Ascending aorta (tissue), 2 donors: ENCODE measurements at regions of chr9 and their contacts with region 1.

Region 1: GRCh38 chr9:119951090-119951489 is 581.9 kb upstream of the BRINP1 start:
- DNase-seq: peak in 1 of 2 donors; percentile 76
- H3K4me3 ChIP-seq: no peak overlapping the region
- H3K27ac ChIP-seq: peak overlapping the region; percentile 39 to 70
- H3K4me1 ChIP-seq: peaks cover 0 to 14% of the 10 kb centered on the region in 2 donors
- H3K27me3 ChIP-seq: no peaks in the 10 kb centered on the region
- CTCF ChIP-seq: no peak

Region 2: DNA sequence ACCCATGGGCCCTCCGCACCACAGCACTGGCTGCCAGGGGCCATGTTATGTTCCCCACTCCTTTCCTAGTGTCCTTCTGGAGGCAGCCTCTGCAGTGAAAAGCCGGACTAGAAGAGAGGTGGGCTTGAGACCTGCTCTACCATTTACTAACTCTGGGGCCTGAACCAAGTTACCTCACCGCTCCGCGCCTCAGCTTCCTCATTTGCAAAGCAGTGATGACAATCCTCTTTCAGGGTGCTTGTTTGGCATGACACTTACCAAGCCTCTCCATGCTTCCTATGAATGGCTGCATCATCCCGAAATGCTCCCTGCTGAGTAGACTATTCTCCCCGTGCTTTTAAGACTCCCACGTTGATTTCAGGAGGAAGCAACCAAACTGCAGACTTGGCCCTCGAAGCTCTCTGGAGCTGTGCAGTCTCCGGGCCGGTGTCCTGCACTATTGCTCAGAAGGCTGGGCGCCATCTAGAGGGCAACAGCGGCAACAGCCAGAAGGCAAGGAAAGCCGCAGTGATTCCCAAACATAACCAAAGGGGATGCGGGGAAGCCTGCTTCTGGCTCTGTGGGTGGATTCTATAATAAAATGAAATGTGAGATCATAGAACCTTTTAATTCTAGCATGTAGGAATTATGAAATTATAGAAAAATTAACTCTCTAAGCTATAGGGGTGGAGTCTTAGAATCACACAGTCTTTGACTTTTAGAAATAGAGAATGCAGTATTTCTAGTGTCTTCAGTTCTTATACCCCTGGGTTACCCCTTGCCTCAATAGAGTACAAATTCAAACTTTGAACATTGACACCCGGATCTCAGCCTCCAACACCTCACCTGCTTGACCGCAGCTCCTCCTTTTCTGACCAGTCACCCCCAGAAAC is 18.0 kb after region 1 on chr9:
- intact Hi-C with region 1: no loop called
- DNase-seq: peak in 1 of 2 donors; percentile 85
- H3K4me3 ChIP-seq: no peak overlapping the region
- H3K27ac ChIP-seq: no peak overlapping the region
- H3K4me1 ChIP-seq: peaks cover 0 to 3% of the 10 kb centered on the region in 2 donors
- H3K27me3 ChIP-seq: no peaks in the 10 kb centered on the region
- CTCF ChIP-seq: peak; percentile 69 to 95 (median 93)

Region 3: GRCh38 chr9:120014799-120015198 is 63.7 kb after region 1 on chr9:
- intact Hi-C with region 1: no loop called
- DNase-seq: no peak
- H3K4me3 ChIP-seq: no peak overlapping the region
- H3K27ac ChIP-seq: no peak overlapping the region
- H3K4me1 ChIP-seq: no peaks in the 10 kb centered on the region
- H3K27me3 ChIP-seq: no peaks in the 10 kb centered on the region
- CTCF ChIP-seq: no peak

Region 4: DNA sequence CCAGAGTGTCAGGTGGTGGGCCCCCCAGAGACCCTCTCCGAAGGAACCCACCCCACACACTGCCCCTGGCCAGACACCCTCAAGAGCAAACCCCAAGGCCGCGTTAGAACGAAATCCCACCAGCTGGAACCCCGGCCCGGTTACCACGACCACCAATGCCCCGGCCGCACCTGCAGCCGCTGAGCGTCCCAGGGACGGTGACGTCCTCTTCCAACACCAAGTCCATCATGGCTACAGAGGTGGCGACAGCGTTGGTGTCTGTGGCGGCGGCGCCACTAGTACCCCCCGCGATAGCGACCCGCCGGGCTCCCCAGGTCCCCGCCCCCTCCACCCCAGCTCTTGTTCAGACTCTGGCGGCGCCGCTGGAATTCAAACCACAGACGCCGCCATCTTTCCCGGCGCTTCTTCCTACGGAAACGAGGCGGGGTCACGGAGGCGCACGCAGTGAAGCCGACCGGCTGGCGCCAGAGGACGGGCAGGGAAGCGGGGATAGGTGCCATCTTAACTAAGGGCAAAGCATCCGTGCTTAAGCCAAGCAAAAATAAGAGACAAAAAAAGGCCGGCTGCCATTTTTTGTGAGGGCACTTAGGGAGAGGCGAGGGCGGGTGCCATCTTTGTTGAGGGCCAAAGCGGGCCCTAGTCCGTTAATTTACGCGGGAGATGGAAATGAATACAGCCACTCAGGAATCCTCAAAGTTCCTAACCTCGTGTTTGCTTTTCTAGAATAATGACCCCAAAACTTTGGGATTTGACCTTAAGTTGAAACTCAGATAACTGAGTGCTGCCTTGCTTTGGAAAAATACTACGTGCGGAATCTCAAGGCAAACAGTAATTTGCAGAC is 628.9 kb after region 1 on chr9 and contains the start of gene CDK5RAP2:
- intact Hi-C with region 1: loop called (anchors 10 kb)
- DNase-seq: peak; percentile 81 to 97
- H3K4me3 ChIP-seq: peak within 1 kb of the TSS; percentile 92 to 95
- H3K27ac ChIP-seq: peak within 1 kb of the TSS; percentile 81
- H3K4me1 ChIP-seq: peaks cover 4 to 15% of the 10 kb centered on the region in 2 donors
- H3K27me3 ChIP-seq: no peaks in the 10 kb centered on the region
- CTCF ChIP-seq: no peak
- total RNA-seq, gene CDK5RAP2: 33.6 TPM